Activated CD8-positive, alpha-beta memory T cell treated with anti-CD3 and anti-CD28 coated beads, Interleukin-2, amount 10 ng/mL, durations not matched to agents 7 days and 5 days (primary cell): ENCODE measurements at regions of chr4 and their contacts with region 1.

Region 1: DNA sequence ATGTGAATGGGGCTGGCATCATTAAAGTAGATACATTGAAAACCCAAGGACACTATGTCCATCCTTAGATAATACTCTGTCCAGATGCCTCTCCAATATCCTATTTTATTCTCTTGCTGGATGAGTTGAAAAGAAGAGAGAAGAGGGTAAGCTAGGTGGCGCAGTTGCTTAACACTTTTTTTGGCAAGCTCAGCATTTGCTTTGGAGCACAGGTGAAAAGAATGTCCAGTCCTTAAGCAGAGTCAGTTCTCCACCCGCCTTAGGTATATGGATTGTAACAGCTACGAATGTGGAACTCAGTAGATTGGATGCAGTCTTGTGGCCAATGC is 208.4 kb downstream of the NWD2 start:
- DNase-seq: peak; percentile 64
- ATAC-seq: peak; percentile 64
- H3K4me3 Mint-ChIP-seq: peak overlapping the region; percentile 60
- H3K27ac Mint-ChIP-seq: no peak overlapping the region
- H3K4me1 Mint-ChIP-seq: peaks cover 16% of the 10 kb centered on the region
- H3K27me3 Mint-ChIP-seq: peaks cover 75% of the 10 kb centered on the region

Region 2: DNA sequence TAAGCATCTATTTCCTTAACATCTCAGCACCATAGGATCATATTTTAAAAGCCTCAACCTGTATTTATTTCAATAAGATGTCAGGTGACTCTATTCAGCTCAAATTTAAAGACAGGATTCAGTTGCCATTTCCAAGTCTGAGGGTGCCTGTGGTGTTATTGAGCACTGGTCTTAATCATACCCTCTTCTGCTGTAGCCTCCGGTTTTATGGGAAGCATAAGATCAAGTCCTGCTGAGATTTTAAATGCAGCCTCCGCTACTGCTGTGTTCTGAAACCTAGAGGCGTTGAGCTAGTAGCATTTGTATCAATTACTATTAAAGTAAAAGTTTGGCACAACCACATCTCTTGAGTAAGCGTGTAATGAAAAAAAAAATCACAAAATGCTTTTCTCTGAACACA is 394.1 kb before region 1 on chr4:
- CTCF ChIA-PET with region 1: no interaction called
- DNase-seq: no peak
- ATAC-seq: no peak
- H3K4me3 Mint-ChIP-seq: no peak overlapping the region
- H3K27ac Mint-ChIP-seq: no peak overlapping the region
- H3K4me1 Mint-ChIP-seq: no peaks in the 10 kb centered on the region
- H3K27me3 Mint-ChIP-seq: no peaks in the 10 kb centered on the region

Region 3: DNA sequence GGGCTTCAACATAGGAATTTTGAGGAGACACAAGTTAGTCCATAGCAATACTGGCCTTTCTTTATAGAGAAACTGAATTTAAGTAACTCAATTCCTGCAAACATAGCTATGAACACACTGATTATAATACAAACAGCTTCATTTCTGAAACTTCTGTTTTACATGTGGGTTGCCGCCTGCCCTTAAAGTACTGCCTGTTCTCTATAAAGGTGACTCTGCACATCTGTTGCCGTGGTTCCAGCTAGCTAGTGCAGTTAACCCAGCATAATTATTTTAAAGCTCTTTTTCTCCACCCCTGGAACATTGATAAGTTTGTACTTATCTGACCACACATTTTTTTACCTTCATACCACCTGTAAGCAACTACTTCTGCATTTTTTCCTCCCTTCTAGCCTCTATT is 30.8 kb before region 1 on chr4:
- CTCF ChIA-PET with region 1: no interaction called
- DNase-seq: no peak
- ATAC-seq: no peak
- H3K4me3 Mint-ChIP-seq: no peak overlapping the region
- H3K27ac Mint-ChIP-seq: no peak overlapping the region
- H3K4me1 Mint-ChIP-seq: no peaks in the 10 kb centered on the region
- H3K27me3 Mint-ChIP-seq: peaks cover 16% of the 10 kb centered on the region

Region 4: GRCh38 chr4:37567841-37568240 is 114.9 kb after region 1 on chr4:
- CTCF ChIA-PET with region 1: interaction called, 22 read pairs
- DNase-seq: no peak
- ATAC-seq: no peak
- H3K4me3 Mint-ChIP-seq: no peak overlapping the region
- H3K27ac Mint-ChIP-seq: no peak overlapping the region
- H3K4me1 Mint-ChIP-seq: peaks cover 1% of the 10 kb centered on the region
- H3K27me3 Mint-ChIP-seq: peaks cover 2% of the 10 kb centered on the region